GM12878 (cell line): ENCODE measurements at regions of chr13 and their contacts with region 1.

Region 1: DNA sequence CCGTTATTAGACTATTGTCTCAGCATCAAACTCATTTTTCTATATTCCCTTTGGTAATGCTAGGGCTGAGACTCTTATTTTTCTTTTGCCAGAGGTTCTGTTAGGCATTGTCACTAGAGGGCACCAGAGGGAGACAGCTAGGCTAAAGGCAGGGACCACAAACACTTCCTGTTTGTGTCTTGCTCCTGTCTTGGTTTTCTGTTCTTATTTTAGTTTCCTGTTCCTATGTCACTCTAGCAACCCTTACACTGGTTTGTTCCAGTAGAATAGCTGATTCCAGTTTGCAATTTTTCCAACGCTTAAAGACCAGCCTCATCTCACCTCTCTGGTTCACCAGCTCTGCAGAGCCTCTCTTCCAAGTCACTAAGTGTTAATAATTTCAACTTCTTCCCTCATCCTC is 772.0 kb downstream of the DIAPH3 start:
- DNase-seq: peak; percentile 45
- ATAC-seq: peak; percentile 97
- H3K4me3 ChIP-seq: no peak overlapping the region
- H3K27ac ChIP-seq: peak overlapping the region; percentile 38
- H3K4me1 ChIP-seq: no peaks in the 10 kb centered on the region
- H3K27me3 ChIP-seq: no peaks in the 10 kb centered on the region
- CTCF ChIP-seq: peak; percentile 76 to 83 (median 83); a peak in 5 of 6 replicates
- EP300 ChIP-seq: no peak
- POLR2A ChIP-seq: no peak
- RAD21 ChIP-seq: peak; percentile 87

Region 2: GRCh38 chr13:59409211-59409610 is 17.5 kb after region 1 on chr13:
- CTCF ChIA-PET with region 1: interaction called, 16 read pairs
- POLR2A ChIA-PET with region 1: no interaction called
- RAD21 ChIA-PET with region 1: no interaction called
- SMC1A ChIA-PET with region 1: interaction called, 3 read pairs
- in situ Hi-C with region 1: no loop called
- intact Hi-C with region 1: no loop called
- DNase-seq: no peak
- ATAC-seq: no peak
- H3K4me3 ChIP-seq: no peak overlapping the region
- H3K27ac ChIP-seq: no peak overlapping the region
- H3K4me1 ChIP-seq: no peaks in the 10 kb centered on the region
- H3K27me3 ChIP-seq: no peaks in the 10 kb centered on the region
- CTCF ChIP-seq: no peak
- EP300 ChIP-seq: no peak
- POLR2A ChIP-seq: no peak
- RAD21 ChIP-seq: no peak

Region 3: GRCh38 chr13:59771272-59771671 is 379.6 kb after region 1 on chr13:
- CTCF ChIA-PET with region 1: interaction called, 7 read pairs
- POLR2A ChIA-PET with region 1: no interaction called
- RAD21 ChIA-PET with region 1: interaction called, 5 read pairs
- SMC1A ChIA-PET with region 1: interaction called, 7 read pairs
- in situ Hi-C with region 1: no loop called
- intact Hi-C with region 1: loop called (anchors 10 kb)
- DNase-seq: no peak
- ATAC-seq: no peak
- H3K4me3 ChIP-seq: no peak overlapping the region
- H3K27ac ChIP-seq: no peak overlapping the region
- H3K4me1 ChIP-seq: no peaks in the 10 kb centered on the region
- H3K27me3 ChIP-seq: no peaks in the 10 kb centered on the region
- CTCF ChIP-seq: peak; percentile 39 to 54 (median 44); a peak in 5 of 6 replicates
- EP300 ChIP-seq: no peak
- POLR2A ChIP-seq: no peak
- RAD21 ChIP-seq: peak; percentile 61

Region 4: GRCh38 chr13:60075850-60076249 is 684.2 kb after region 1 on chr13:
- CTCF ChIA-PET with region 1: no interaction called
- POLR2A ChIA-PET with region 1: no interaction called
- RAD21 ChIA-PET with region 1: no interaction called
- SMC1A ChIA-PET with region 1: no interaction called
- in situ Hi-C with region 1: no loop called
- intact Hi-C with region 1: no loop called
- DNase-seq: no peak
- ATAC-seq: no peak
- H3K4me3 ChIP-seq: no peak overlapping the region
- H3K27ac ChIP-seq: no peak overlapping the region
- H3K4me1 ChIP-seq: no peaks in the 10 kb centered on the region
- H3K27me3 ChIP-seq: no peaks in the 10 kb centered on the region
- CTCF ChIP-seq: no peak
- EP300 ChIP-seq: no peak
- POLR2A ChIP-seq: no peak
- RAD21 ChIP-seq: no peak

Region 5: GRCh38 chr13:60329221-60329983 is 937.7 kb after region 1 on chr13:
- CTCF ChIA-PET with region 1: interaction called, 16 read pairs
- POLR2A ChIA-PET with region 1: no interaction called
- RAD21 ChIA-PET with region 1: no interaction called
- SMC1A ChIA-PET with region 1: no interaction called
- in situ Hi-C with region 1: loop called (anchors 10 kb)
- intact Hi-C with region 1: loop called (anchors 2 kb)
- DNase-seq: peak; percentile 7
- ATAC-seq: peak; percentile 89
- H3K4me3 ChIP-seq: no peak overlapping the region
- H3K27ac ChIP-seq: no peak overlapping the region
- H3K4me1 ChIP-seq: no peaks in the 10 kb centered on the region
- H3K27me3 ChIP-seq: no peaks in the 10 kb centered on the region
- CTCF ChIP-seq: peak; percentile 43 to 59 (median 57); a peak in 5 of 6 replicates
- EP300 ChIP-seq: no peak
- POLR2A ChIP-seq: no peak
- RAD21 ChIP-seq: peak; percentile 84

Region 6: GRCh38 chr13:60335531-60335930 is 943.8 kb after region 1 on chr13:
- CTCF ChIA-PET with region 1: interaction called, 16 read pairs
- POLR2A ChIA-PET with region 1: no interaction called
- RAD21 ChIA-PET with region 1: interaction called, 3 read pairs
- SMC1A ChIA-PET with region 1: no interaction called
- in situ Hi-C with region 1: no loop called
- intact Hi-C with region 1: loop called (anchors 2 kb)
- DNase-seq: no peak
- ATAC-seq: no peak
- H3K4me3 ChIP-seq: no peak overlapping the region
- H3K27ac ChIP-seq: no peak overlapping the region
- H3K4me1 ChIP-seq: no peaks in the 10 kb centered on the region
- H3K27me3 ChIP-seq: no peaks in the 10 kb centered on the region
- CTCF ChIP-seq: peak in 2 of 3 experiments; percentile 23 to 47; a peak in 4 of 6 replicates
- EP300 ChIP-seq: no peak
- POLR2A ChIP-seq: no peak
- RAD21 ChIP-seq: peak; percentile 56

Region 7: DNA sequence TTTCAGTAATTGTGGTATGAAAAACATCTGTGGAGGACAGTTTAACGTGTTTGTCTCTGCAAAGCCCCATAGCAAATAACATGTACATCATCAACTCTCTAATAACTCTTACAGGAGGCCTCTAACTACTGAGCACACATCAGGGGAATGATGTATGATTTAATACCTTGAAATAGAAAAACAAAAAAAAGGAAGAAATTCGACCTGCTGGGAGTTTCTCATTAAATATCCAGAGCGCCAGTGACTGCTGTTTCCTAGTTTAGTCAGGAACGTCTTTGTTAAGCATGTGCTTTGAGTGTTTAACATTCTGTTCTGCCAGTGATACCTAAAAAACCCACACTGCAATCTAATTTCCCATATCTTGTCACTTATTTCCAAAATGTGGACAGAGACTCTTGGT is 1788.5 kb after region 1 on chr13:
- CTCF ChIA-PET with region 1: no interaction called
- POLR2A ChIA-PET with region 1: no interaction called
- RAD21 ChIA-PET with region 1: no interaction called
- SMC1A ChIA-PET with region 1: no interaction called
- in situ Hi-C with region 1: no loop called
- intact Hi-C with region 1: no loop called
- DNase-seq: no peak
- ATAC-seq: no peak
- H3K4me3 ChIP-seq: no peak overlapping the region
- H3K27ac ChIP-seq: no peak overlapping the region
- H3K4me1 ChIP-seq: no peaks in the 10 kb centered on the region
- H3K27me3 ChIP-seq: no peaks in the 10 kb centered on the region
- CTCF ChIP-seq: no peak
- EP300 ChIP-seq: no peak
- POLR2A ChIP-seq: no peak
- RAD21 ChIP-seq: no peak